Naive thymus-derived CD4-positive, alpha-beta T cell (primary cell): ENCODE measurements at regions of chr7 and their contacts with region 1.

Region 1: DNA sequence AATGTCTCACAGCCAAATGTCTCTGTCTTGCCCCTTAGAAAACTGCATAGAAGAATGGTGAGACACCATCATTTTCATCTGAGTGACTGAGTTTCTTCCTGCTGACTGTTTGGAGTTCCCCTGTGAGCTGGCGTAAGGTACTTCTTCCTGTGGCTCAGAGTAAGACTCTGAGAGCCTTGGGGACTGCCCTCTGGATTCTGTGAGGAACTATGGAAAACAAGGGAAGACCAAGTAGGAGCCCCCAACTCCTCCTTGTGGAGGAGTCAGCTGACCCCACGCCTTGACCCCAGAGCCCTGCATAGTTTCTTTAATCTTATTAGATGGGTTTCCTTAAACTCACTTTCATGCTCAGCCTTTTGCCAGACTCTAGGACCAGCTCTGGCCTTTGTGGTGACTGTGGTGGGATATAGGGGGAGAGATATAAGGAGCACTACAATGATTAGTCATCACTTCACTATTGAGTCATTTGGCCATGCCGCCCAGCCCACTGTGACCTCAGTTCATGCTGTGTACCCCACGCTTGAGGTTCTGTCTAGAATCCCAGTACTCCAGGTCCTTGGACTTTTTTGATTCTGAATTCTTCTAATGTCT is 51.8 kb upstream of the FAM133B start:
- DNase-seq: peak in 1 of 9 donors; percentile 73
- ATAC-seq: peak; percentile 83
- H3K4me3 ChIP-seq: no peak overlapping the region
- H3K4me3 Mint-ChIP-seq: peak overlapping the region in 9 of 10 donors; percentile 1 to 67 (median 26)
- H3K27ac ChIP-seq: peak overlapping the region; percentile 10
- H3K27ac Mint-ChIP-seq: peak overlapping the region in 8 of 9 donors; percentile 12 to 97 (median 68)
- H3K4me1 ChIP-seq: peaks cover 20 to 24% of the 10 kb centered on the region in 2 donors
- H3K4me1 Mint-ChIP-seq: peaks cover 45 to 85% (median 67%) of the 10 kb centered on the region in 7 donors
- H3K27me3 ChIP-seq: no peaks in the 10 kb centered on the region
- H3K27me3 Mint-ChIP-seq: no peaks in the 10 kb centered on the region

Region 2: GRCh38 chr7:92652536-92652935 is 10.5 kb after region 1 on chr7:
- CTCF ChIA-PET with region 1: no interaction called
- POLR2A ChIA-PET with region 1: interaction called, 4 read pairs
- intact Hi-C with region 1: loop called in 1 of 2 experiments (anchors 2 kb)
- DNase-seq: no peak
- ATAC-seq: no peak
- H3K4me3 ChIP-seq: no peak overlapping the region
- H3K4me3 Mint-ChIP-seq: no peak overlapping the region
- H3K27ac ChIP-seq: no peak overlapping the region
- H3K27ac Mint-ChIP-seq: peak overlapping the region in 1 of 9 donors; percentile 38
- H3K4me1 ChIP-seq: peaks cover under 1 to 3% of the 10 kb centered on the region in 2 donors
- H3K4me1 Mint-ChIP-seq: peaks cover 17 to 62% (median 26%) of the 10 kb centered on the region in 7 donors
- H3K27me3 ChIP-seq: no peaks in the 10 kb centered on the region
- H3K27me3 Mint-ChIP-seq: no peaks in the 10 kb centered on the region

Region 3: DNA sequence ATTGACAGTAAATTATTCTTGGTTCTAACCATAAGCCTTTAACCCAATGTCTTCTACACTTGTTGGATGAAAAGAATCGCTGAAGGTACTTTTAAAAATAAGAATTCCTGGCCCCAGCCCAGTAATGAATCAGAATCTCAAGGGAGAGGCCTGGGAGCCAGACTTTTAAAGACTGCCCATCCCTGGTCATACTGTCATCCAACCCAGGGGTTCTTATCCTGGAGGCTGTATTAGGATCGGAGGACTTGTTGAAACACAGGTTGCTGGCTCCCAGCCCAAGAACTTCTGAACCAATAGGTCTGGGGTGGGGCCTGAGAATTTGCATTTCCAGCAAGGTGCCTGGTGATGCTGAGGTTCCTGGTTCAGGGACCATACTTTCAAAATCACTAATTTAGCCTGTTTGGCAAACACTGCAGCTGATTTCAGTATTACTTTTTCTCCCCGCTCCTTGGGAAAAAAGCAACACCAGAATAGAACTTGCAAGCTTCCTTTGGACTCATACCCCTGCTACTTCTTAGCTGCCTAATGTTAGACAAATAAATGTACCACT is 27.7 kb after region 1 on chr7:
- CTCF ChIA-PET with region 1: no interaction called
- POLR2A ChIA-PET with region 1: no interaction called
- intact Hi-C with region 1: loop called in 1 of 2 experiments (anchors 2 kb)
- DNase-seq: no peak
- ATAC-seq: no peak
- H3K4me3 ChIP-seq: no peak overlapping the region
- H3K4me3 Mint-ChIP-seq: peak overlapping the region in 1 of 10 donors; percentile 23
- H3K27ac ChIP-seq: no peak overlapping the region
- H3K27ac Mint-ChIP-seq: peak overlapping the region in 2 of 9 donors; percentile 52 to 53
- H3K4me1 ChIP-seq: no peaks in the 10 kb centered on the region
- H3K4me1 Mint-ChIP-seq: peaks cover 9 to 72% (median 18%) of the 10 kb centered on the region in 7 donors
- H3K27me3 ChIP-seq: no peaks in the 10 kb centered on the region
- H3K27me3 Mint-ChIP-seq: no peaks in the 10 kb centered on the region